Adrenal gland (tissue), 19 donors: ENCODE measurements at regions of chr14 and their contacts with region 1.

Region 1: DNA sequence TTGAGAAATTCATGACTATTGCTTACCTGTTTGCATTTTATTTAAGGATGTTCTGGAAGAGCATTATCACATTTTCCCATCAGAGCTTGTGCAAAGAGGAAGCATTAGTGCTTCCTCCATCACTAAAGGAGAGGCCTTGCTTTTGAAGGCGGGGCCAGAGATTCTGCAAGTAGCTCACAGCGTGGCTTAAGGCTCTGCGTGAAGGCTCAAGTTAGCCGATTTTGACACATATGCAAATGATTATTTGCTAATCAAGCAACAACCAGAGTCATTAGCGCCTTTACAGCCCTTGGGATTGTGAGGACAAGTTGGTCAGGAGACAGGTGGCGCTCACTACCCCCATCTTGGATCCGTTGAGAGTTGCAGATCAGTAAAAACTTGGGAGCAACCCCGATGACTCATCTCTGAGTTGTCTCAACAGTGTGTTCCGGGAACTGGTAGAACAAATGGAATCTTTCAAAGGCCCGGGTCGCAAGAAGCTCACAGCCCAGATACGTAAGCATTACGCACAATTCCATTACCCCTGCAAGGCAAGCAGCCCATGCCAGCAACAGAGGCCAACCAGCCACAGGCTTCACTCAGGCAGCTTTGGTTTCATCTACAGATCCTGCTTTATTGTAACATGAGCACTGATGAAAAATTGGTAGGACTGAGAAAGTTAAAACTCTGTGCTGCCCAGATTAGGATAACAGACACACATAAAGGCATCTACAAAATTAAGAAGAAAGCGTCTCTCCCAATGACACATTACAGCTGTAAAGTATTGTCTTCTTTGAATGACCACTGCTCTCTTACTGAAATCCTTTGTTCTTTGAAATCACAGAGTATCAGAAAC is 34.9 kb upstream of the SPTSSA start:
- DNase-seq: peak; percentile 79 to 95 (median 94)
- H3K4me3 ChIP-seq: no peak overlapping the region
- H3K27ac ChIP-seq: peak overlapping the region; percentile 57 to 90 (median 82)
- H3K4me1 ChIP-seq: peaks cover 13 to 16% of the 10 kb centered on the region in 2 donors
- H3K27me3 ChIP-seq: no peaks in the 10 kb centered on the region
- CTCF ChIP-seq: no peak
- POLR2A ChIP-seq: peak; percentile 29 to 79

Region 2: GRCh38 chr14:34331728-34332623 is 164.9 kb before region 1 on chr14:
- intact Hi-C with region 1: loop called in 1 of 2 experiments (anchors 2 kb)
- DNase-seq: peak; percentile 56 to 85 (median 71)
- H3K4me3 ChIP-seq: no peak overlapping the region
- H3K27ac ChIP-seq: peak overlapping the region in 1 of 5 donors; percentile 8
- H3K4me1 ChIP-seq: no peaks in the 10 kb centered on the region
- H3K27me3 ChIP-seq: no peaks in the 10 kb centered on the region
- CTCF ChIP-seq: peak; percentile 74 to 89 (median 80)
- POLR2A ChIP-seq: no peak

Region 3: GRCh38 chr14:34365309-34365915 is 131.5 kb before region 1 on chr14:
- intact Hi-C with region 1: loop called (anchors 10 kb)
- DNase-seq: no peak
- H3K4me3 ChIP-seq: no peak overlapping the region
- H3K27ac ChIP-seq: no peak overlapping the region
- H3K4me1 ChIP-seq: peaks cover 0 to 18% of the 10 kb centered on the region in 2 donors
- H3K27me3 ChIP-seq: no peaks in the 10 kb centered on the region
- CTCF ChIP-seq: peak; percentile 14 to 56 (median 45)
- POLR2A ChIP-seq: no peak

Region 4: GRCh38 chr14:35365130-35366055 is 868.5 kb after region 1 on chr14:
- intact Hi-C with region 1: no loop called
- DNase-seq: peak; percentile 89 to 98 (median 97)
- H3K4me3 ChIP-seq: no peak overlapping the region
- H3K27ac ChIP-seq: peak overlapping the region; percentile 84 to 97 (median 91)
- H3K4me1 ChIP-seq: peaks cover 18 to 24% of the 10 kb centered on the region in 2 donors
- H3K27me3 ChIP-seq: no peaks in the 10 kb centered on the region
- CTCF ChIP-seq: no peak
- POLR2A ChIP-seq: peak in 1 of 2 donors; percentile 78